Astrocyte of the cerebellum (primary cell): ENCODE measurements at regions of chr17 and their contacts with region 1.

Region 1: GRCh38 chr17:29451121-29451742 is 61.1 kb downstream of the TAOK1 start:
- DNase-seq: no peak
- H3K4me3 ChIP-seq: no peak overlapping the region
- CTCF ChIP-seq: no peak

Region 2: DNA sequence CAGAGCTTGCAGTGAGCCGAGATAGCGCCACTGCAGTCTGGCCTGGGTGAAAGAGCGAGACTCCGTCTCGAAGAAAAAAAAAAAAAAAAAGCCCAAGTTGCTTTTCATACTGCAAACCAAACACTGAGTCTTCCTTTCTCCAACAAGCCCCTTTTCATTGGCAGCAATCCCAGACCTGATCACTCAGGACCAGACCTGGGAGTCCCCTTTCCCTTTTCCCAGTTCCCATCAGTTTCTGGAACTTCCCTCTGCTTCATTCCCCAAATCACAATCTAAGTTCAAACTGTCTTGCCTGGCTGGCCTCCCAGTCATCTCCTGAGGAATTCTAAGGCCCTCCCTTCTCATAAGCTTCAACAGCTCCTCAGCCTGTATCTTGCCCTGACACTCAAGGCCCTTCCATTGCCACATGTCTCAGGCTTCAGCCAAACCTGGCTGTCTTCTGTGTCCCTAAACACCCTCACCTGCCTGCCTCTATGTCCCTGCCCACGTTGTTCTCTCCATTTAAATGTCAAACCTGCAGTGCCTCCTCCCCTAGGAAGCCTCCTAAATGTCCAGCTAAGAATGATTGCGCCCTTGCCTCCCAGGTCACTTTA is 488.1 kb before region 1 on chr17:
- in situ Hi-C with region 1: no loop called
- DNase-seq: no peak
- H3K4me3 ChIP-seq: no peak overlapping the region
- CTCF ChIP-seq: no peak

Region 3: GRCh38 chr17:29389982-29390850 is 61.0 kb before region 1 on chr17 and contains the start of gene TAOK1:
- in situ Hi-C with region 1: no loop called
- DNase-seq: peak; percentile 93
- H3K4me3 ChIP-seq: peak within 1 kb of the TSS; percentile 92
- CTCF ChIP-seq: no peak

Region 4: DNA sequence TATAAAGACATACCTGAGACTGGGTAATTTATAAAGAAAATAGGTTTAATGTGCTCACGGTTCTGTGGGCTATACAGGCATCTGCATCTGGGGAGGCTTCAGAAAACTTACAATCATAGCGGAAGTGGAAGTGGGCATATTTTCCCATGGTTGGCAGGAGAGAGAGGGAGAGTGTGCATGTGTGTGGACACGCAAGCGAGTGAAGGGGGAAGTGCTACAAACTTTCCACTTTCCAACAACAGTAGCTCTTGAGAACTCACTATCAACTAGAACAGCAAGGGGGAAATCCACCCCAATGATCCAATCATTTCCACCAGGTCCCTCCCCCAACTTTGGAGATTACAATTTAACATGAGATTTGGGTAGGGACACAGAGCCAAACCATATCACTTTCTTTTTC is 50.0 kb before region 1 on chr17:
- in situ Hi-C with region 1: loop called (anchors 10 kb)
- DNase-seq: no peak
- H3K4me3 ChIP-seq: no peak overlapping the region
- CTCF ChIP-seq: no peak

Region 5: DNA sequence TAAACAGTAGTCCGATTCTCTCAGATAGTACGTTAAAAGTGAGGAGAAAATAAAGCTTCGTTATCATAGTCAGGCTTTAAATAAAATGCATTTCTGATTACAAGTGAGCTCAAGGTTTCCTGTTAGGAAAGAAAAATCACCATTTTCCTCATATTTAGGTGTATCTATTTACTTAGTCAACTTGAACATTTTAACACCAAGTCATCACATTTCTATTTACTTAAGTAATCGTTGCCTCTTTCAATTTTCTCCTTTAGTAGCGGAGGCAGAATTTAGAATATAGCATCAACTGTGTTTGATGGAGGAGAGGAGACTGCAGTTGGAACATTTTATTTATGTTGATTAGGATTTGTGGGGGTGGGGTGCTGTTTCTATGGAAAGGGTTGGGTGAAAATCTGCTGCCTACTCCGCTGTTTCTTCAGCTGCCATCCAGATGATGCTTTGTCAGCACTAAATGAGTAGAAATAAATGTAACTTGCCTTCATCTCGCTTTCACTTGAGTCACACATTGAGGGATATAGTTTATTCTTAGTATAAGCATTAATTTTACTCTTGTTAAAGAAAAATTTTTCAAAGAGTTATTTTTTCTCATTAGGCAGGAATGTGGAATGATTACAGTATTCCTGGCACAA is 73.3 kb after region 1 on chr17:
- in situ Hi-C with region 1: loop called (anchors 10 kb)
- DNase-seq: no peak
- H3K4me3 ChIP-seq: no peak overlapping the region
- CTCF ChIP-seq: no peak